Activated T-helper 2 cell treated with anti-CD3 and anti-CD28 coated beads, Interferon-gamma antibody, Interleukin-2, Interleukin-4, amounts not matched to agents 10 μg/mL and 5 μg/mL and 100 μg/mL, durations not matched to agents 14 hours and 24 hours and 36 hours (primary cell): ENCODE measurements at regions of chr11 and their contacts with region 1.

Region 1: GRCh38 chr11:82900277-82901164 is at the start of gene PRCP:
- DNase-seq: peak; percentile 94
- H3K4me3 Mint-ChIP-seq: peak within 1 kb of the TSS; percentile 100
- H3K27ac Mint-ChIP-seq: peak within 1 kb of the TSS; percentile 100
- H3K4me1 Mint-ChIP-seq: peaks cover 55% of the 10 kb centered on the region
- H3K27me3 Mint-ChIP-seq: no peaks in the 10 kb centered on the region
- total RNA-seq, gene PRCP: 23.5 and 27.5 TPM in 2 replicates

Region 2: GRCh38 chr11:82867495-82868082 is 32.9 kb before region 1 on chr11:
- intact Hi-C with region 1: loop called (anchors 1 kb)
- DNase-seq: peak; percentile 49
- H3K4me3 Mint-ChIP-seq: no peak overlapping the region
- H3K27ac Mint-ChIP-seq: no peak overlapping the region
- H3K4me1 Mint-ChIP-seq: peaks cover 16% of the 10 kb centered on the region
- H3K27me3 Mint-ChIP-seq: peaks cover 7% of the 10 kb centered on the region

Region 3: DNA sequence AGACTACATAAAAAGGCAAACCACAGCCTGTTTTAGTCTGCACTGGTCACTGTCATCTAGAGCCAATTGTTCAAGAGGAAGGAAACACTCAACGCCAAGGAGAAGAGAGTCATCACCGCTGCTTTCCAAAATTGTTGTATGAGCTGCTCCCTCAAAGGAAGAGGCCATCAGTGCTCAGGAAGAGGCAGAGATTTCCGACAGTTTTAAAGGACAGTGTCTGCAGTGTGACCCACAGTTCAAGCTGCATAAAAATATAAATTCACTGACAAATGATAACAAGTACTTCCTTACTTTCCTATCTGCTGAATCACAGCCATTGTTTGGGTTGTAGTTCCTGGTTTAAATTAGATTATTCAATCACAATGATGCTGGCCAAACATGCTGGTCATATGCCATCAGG is 16.7 kb before region 1 on chr11:
- intact Hi-C with region 1: no loop called
- DNase-seq: no peak
- H3K4me3 Mint-ChIP-seq: no peak overlapping the region
- H3K27ac Mint-ChIP-seq: no peak overlapping the region
- H3K4me1 Mint-ChIP-seq: no peaks in the 10 kb centered on the region
- H3K27me3 Mint-ChIP-seq: no peaks in the 10 kb centered on the region

Region 4: DNA sequence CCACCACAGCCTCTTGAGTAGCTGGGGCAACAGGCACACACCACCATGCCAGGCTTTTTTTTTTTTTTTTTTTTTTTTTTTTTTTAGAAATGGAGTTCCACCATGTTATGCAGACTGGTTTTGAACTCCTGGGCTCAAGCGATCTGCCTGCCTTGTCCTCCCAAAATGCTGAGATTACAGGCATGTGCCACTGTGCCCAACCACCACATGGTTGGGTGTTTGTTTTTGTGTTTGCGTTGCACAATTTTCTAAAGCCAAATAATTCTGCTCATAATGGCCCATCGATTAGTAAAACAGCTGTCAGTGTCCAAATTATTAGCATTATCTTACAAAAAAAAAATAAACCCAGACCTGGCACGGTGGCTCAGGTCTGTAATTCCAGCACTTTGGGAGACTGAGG is 66.9 kb after region 1 on chr11:
- intact Hi-C with region 1: no loop called
- DNase-seq: no peak
- H3K4me3 Mint-ChIP-seq: no peak overlapping the region
- H3K27ac Mint-ChIP-seq: no peak overlapping the region
- H3K4me1 Mint-ChIP-seq: peaks cover 22% of the 10 kb centered on the region
- H3K27me3 Mint-ChIP-seq: peaks cover 10% of the 10 kb centered on the region

Region 5: DNA sequence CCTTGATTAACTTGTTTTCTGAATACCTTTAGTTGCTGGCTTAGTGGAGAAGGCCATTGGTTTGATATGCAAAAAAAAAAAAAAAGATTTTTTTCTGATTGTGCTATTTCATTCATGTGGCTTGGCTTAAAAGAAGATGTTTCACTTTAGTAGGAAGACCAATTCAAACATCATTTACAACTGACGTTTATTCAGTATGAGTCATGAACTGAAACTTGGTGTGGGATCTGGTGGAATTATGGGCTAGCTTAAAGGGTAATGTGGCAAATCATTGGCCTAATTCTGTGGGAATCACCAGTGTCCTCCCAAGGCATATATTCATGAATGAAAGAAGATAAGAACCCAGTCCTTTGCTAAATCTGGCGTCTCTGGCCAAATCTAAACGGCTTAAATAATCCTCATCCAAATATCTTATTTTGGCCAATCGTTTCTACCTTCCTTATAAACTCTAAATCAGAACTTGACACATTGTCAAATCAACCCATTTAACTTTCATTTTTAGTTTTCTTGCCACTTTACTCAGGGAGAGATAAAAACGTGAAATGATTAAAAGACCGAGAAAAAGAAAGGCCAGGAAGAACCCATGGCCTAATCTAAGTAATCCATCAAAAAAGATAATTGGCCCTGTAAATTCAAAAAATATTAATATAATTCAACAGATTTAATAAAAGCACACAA is 78.0 kb after region 1 on chr11:
- intact Hi-C with region 1: loop called (anchors 2 kb)
- DNase-seq: no peak
- H3K4me3 Mint-ChIP-seq: peak overlapping the region; percentile 9
- H3K27ac Mint-ChIP-seq: peak overlapping the region; percentile 73
- H3K4me1 Mint-ChIP-seq: peaks cover 42% of the 10 kb centered on the region
- H3K27me3 Mint-ChIP-seq: no peaks in the 10 kb centered on the region

Region 6: GRCh38 chr11:83156150-83156995 is 255.9 kb after region 1 on chr11:
- intact Hi-C with region 1: loop called (anchors 1 kb)
- DNase-seq: peak; percentile 96
- H3K4me3 Mint-ChIP-seq: peak overlapping the region; percentile 99
- H3K27ac Mint-ChIP-seq: peak overlapping the region; percentile 100
- H3K4me1 Mint-ChIP-seq: peaks cover 24% of the 10 kb centered on the region
- H3K27me3 Mint-ChIP-seq: no peaks in the 10 kb centered on the region

Region 7: DNA sequence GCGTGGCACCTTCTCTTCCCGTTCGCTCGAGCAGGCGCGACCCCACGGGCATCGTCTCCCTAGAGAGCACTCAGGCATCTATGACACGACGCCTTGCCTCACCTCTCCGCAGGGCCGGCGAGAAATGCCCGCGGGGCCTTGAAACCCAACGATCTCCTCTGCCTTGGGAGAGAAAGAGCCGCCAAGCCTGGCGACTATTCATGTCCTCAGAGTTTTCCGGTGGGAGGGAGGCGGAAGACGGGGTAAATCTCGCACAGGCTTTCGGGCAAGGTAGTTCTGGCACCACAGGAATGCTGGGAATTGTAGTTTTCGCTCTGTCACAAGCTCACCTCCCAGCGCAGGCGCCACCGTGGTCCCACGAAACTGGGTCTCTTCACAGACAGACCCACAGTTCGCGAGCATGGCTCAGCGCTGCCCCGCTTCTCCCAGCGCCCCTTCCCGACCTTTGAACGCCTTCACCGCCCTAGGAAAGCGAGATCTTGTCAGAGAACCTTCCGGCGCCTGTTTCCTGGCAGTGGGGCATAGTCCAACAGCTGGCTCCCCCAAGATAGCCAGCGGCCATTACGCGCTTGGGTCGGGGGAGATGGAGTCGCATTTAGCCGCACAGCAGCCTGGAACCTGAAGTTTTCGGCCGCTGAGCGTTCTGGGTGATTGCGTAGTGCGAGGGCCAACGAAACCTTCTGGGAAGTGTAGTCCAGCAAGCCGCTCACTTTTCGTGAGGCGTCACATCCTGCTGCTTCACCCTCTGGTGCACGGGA is 385.4 kb after region 1 on chr11 and contains the start of gene CCDC90B:
- intact Hi-C with region 1: loop called (anchors 1 kb)
- DNase-seq: peak; percentile 91
- H3K4me3 Mint-ChIP-seq: peak within 1 kb of the TSS; percentile 89
- H3K27ac Mint-ChIP-seq: peak within 1 kb of the TSS; percentile 96
- H3K4me1 Mint-ChIP-seq: peaks cover 26% of the 10 kb centered on the region
- H3K27me3 Mint-ChIP-seq: peaks cover 3% of the 10 kb centered on the region
- total RNA-seq, gene CCDC90B: 25.4 and 27.2 TPM in 2 replicates